ENCODE measurements at regions of chr13 and their contacts with region 1.

Region 1: DNA sequence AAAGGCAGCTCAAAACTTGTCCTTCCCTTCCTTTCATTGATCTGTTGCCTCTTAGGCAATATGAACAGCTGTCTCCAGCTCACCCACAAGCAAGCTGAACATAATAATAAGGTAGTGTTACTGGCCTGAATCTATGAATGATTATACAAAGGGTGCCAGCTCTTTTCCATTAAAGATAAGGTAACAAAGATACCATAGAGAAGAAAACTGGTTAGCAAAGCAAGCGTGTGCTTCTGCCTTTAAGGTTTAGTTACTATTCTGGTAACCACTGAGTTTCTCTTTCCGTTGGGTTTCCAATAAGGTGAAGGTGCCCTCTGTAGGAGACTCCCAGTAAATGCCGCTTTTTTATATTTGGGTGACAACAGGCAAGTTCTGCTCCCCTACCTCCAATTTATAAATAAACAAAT is 12.1 kb upstream of the DACH1 start:
- DNase-seq: peak; percentile 8
- ATAC-seq: peak; percentile 79
- H3K4me3 ChIP-seq: no peak overlapping the region
- H3K27ac ChIP-seq: no peak overlapping the region
- H3K4me1 ChIP-seq: no peaks in the 10 kb centered on the region
- H3K27me3 ChIP-seq: no peaks in the 10 kb centered on the region
- CTCF ChIP-seq: peak in 2 of 3 experiments; percentile 34 to 46; a peak in 4 of 6 replicates
- POLR2A ChIP-seq: no peak
- RAD21 ChIP-seq: peak; percentile 34; the same call in 1 of the 2 replicates

Region 2: DNA sequence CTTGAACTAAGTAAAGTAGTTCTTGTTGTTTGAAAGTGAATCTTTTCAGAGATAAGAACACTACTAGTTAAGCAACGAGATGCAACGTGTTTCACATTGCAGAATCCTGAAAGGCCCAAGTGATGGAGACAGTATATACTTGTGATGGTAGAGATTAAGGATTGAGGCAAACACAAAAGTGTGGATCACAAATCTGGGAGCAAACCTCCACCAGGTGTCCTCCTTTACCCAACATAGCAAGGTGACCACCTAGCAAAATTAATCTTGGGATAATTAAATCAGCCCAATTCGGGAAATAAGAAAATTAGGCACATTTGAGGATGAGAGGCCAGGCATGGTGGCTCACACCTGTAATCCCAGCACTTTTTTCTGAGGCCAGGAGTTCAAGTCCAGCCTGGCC is 576.0 kb before region 1 on chr13:
- CTCF ChIA-PET with region 1: interaction called, 3 read pairs
- POLR2A ChIA-PET with region 1: no interaction called
- RAD21 ChIA-PET with region 1: no interaction called
- intact Hi-C with region 1: loop called (anchors 5 kb)
- DNase-seq: no peak
- ATAC-seq: no peak
- H3K4me3 ChIP-seq: no peak overlapping the region
- H3K27ac ChIP-seq: no peak overlapping the region
- H3K4me1 ChIP-seq: no peaks in the 10 kb centered on the region
- H3K27me3 ChIP-seq: no peaks in the 10 kb centered on the region
- CTCF ChIP-seq: 0 out of 6 replicates have a peak, but pooled peaks of 2 of the 3 experiments have one; percentile 6 to 9
- POLR2A ChIP-seq: no peak
- RAD21 ChIP-seq: peak; percentile 39; the same call in 1 of the 2 replicates

Region 3: DNA sequence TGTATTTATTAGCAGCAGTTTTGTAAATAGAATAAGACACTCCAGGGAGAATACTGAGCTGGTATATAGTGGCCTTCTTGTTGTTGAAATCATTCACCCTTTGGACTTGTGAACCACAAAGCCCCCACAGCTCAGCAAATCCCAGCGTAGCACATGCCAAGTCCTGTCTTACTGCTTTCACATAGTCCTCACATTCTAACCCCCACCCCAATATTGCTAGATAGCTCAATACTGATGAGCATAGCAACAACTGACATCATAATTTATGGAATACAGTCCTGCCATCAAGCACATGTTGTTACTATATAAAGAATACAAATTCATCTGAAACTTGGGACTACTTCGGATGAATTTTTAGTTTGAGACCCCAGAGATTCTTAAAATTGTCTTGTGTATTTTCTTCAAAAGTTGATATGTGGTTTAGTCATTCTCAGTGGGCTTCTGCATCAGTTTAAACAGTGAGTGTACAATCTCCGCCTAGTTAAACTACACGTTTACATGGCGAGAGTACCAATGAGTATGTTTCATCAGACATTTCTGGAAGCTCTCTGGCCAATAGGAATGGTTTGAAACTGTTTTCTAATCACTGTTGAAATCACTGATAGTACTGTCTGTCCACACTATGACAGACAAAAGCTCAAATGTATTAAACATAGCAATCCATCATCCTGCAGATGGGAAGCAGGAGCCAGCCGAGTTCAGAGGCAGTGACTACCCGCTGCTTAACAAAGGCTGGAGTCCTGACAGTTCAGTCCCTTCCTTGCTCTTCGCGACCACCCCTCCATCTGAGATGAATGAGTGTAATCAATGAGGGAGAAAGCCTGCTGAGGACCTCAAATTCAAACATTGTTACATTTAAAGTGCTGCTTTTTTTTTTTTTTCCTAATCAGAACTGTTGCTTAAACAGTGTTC is 27.4 kb before region 1 on chr13:
- CTCF ChIA-PET with region 1: no interaction called
- POLR2A ChIA-PET with region 1: no interaction called
- RAD21 ChIA-PET with region 1: no interaction called
- intact Hi-C with region 1: no loop called
- DNase-seq: no peak
- ATAC-seq: no peak
- H3K4me3 ChIP-seq: no peak overlapping the region
- H3K27ac ChIP-seq: no peak overlapping the region
- H3K4me1 ChIP-seq: no peaks in the 10 kb centered on the region
- H3K27me3 ChIP-seq: no peaks in the 10 kb centered on the region
- CTCF ChIP-seq: no peak
- POLR2A ChIP-seq: no peak
- RAD21 ChIP-seq: no peak

Measured in HCT116 (cell line).